ENCODE measurements at regions of chr2 and their contacts with region 1.

Region 1: GRCh38 chr2:117814417-117815264 is at the start of gene DDX18:
- DNase-seq: peak; percentile 81
- H3K4me3 ChIP-seq: peak within 1 kb of the TSS; percentile 90
- H3K27me3 ChIP-seq: no peaks in the 10 kb centered on the region
- CTCF ChIP-seq: peak; percentile 100
- polyA plus RNA-seq, gene DDX18: 30.9 and 42.8 TPM in 2 replicates

Region 2: DNA sequence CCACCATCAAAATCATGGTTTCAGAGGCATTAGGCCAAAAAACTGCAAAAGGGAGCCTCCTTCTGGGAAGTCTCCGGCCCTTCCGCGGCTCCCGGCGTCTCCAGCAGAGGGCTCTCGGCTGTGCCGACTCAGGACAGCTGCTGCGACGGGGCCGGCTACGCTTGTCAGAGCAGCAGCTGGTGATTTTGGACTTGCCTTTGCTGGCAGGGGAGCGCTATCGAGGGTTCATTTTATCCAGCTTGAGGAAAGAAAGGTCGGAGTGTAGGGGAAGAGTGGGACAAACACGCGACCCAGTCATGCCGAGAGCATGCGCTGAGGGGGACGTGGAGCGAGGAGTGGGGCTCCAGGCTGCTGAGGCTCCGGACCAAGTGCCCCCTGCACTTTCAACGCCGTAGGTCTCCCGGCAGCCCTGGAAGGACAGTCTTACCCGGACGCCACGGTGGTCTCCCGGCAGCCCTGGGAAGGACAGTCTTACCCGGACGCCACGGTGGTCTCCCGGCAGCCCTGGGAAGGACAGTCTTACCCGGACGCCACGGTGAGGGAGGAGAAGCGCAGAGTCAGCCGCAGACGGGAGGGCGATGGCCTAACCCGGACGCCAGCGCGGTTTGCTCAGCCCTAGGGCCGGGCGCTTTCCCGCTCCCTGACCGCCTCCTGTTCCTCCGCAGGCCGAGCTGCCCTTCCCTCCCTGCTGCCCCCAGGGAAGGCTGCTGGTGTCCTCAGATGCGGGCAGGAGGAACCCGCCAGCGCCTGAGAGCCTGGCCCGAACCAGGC is 21.5 kb after region 1 on chr2:
- CTCF ChIA-PET with region 1: interaction called, 39 read pairs
- POLR2A ChIA-PET with region 1: no interaction called
- DNase-seq: no peak
- H3K4me3 ChIP-seq: peak overlapping the region; percentile 41
- H3K27me3 ChIP-seq: no peaks in the 10 kb centered on the region
- CTCF ChIP-seq: peak; percentile 98

Region 3: GRCh38 chr2:117980783-117981676 is 166.4 kb after region 1 on chr2:
- CTCF ChIA-PET with region 1: interaction called, 10 read pairs
- POLR2A ChIA-PET with region 1: no interaction called
- DNase-seq: peak; percentile 96
- H3K4me3 ChIP-seq: no peak overlapping the region
- H3K27me3 ChIP-seq: no peaks in the 10 kb centered on the region
- CTCF ChIP-seq: no peak

Region 4: DNA sequence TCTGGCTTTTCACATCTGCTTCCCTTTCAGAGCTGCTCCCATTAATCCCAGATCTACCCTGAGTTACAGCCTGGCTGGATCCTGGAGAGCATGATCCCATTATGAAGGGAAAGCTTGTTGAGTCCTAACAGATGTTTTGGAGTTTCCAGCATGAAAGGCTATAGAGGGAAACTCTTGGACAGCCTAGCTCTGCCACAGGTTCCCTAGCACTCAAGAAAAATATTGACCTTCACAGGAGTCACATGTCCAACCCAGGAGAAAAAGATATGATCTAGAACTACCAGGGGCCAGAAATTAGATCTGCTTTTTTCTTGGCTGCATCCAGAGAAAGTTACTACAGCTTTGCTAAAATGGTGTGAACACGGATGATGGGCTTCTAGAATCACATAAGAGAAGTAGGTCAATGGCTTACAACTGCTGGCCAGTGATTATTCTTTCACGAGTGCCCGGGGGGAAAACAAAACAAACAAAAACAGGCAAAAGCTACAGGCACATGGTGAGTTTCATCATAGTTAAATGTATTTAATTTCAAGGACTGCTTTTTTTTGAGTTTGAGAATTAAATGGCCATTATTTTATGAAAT is 183.3 kb after region 1 on chr2:
- CTCF ChIA-PET with region 1: interaction called, 139 read pairs
- POLR2A ChIA-PET with region 1: no interaction called
- DNase-seq: no peak
- H3K4me3 ChIP-seq: no peak overlapping the region
- H3K27me3 ChIP-seq: no peaks in the 10 kb centered on the region
- CTCF ChIP-seq: no peak

Measured in BJ (cell line).